B cell (primary cell): ENCODE measurements at regions of chr18 and their contacts with region 1.

Region 1: DNA sequence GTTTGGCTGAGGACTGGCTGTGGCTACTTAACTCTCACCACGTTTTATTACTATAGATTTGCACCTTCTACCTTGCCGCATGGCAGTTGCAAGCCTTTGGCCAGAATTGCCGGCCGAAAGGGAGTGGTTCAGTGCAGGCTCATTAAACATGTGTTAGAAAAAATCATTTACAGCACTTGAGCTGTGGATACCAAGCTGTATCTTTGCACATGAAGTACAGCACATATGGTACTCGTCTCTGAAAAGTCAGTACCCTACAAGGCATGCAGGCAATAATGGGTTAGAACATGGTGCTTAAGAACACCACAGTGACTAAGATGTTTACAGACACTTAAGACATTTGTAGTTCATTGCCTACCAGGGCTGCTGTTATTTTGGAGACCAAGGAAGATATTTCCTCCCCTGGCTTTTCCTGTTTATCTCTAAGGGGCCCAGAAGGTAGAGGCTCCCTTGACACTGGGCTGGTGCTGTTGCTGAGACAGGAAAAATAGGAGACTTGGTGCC is 103.1 kb downstream of the ZNF532 start:
- DNase-seq: no peak
- ATAC-seq: no peak
- H3K4me3 ChIP-seq: no peak overlapping the region
- H3K4me3 Mint-ChIP-seq: peak overlapping the region; percentile 75
- H3K27ac ChIP-seq: peak overlapping the region; percentile 94 to 99
- H3K27ac Mint-ChIP-seq: peak overlapping the region; percentile 95
- H3K4me1 ChIP-seq: peaks cover 86 to 88% of the 10 kb centered on the region in 2 donors
- H3K4me1 Mint-ChIP-seq: peaks cover 86% of the 10 kb centered on the region
- H3K27me3 ChIP-seq: no peaks in the 10 kb centered on the region
- H3K27me3 Mint-ChIP-seq: no peaks in the 10 kb centered on the region
- CTCF ChIP-seq: no peak

Region 2: DNA sequence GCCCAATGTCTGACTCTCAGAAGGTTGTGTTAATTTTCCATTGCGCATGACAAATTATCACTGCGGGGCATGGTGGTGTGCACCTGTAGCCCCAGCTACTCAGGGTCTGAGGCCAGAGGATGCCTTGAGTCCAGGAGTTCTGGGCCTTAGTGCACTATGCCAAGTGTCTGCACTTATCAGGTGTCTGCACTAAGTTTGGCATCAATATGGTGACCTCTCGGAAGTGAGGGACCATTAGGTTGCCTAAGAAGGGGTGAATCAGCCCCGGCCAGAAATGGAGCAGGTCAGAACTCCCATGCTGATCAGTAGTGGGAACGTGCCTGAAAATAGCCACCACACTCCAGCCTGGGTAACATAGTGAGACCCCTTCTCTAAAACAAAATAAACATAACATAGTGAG is 164.8 kb before region 1 on chr18:
- CTCF ChIA-PET with region 1: no interaction called
- POLR2A ChIA-PET with region 1: no interaction called
- intact Hi-C with region 1: no loop called
- DNase-seq: no peak
- ATAC-seq: no peak
- H3K4me3 ChIP-seq: no peak overlapping the region
- H3K4me3 Mint-ChIP-seq: no peak overlapping the region
- H3K27ac ChIP-seq: no peak overlapping the region
- H3K27ac Mint-ChIP-seq: no peak overlapping the region
- H3K4me1 ChIP-seq: peaks cover 4 to 6% of the 10 kb centered on the region in 2 donors
- H3K4me1 Mint-ChIP-seq: peaks cover 7% of the 10 kb centered on the region
- H3K27me3 ChIP-seq: no peaks in the 10 kb centered on the region
- H3K27me3 Mint-ChIP-seq: no peaks in the 10 kb centered on the region
- CTCF ChIP-seq: no peak

Region 3: DNA sequence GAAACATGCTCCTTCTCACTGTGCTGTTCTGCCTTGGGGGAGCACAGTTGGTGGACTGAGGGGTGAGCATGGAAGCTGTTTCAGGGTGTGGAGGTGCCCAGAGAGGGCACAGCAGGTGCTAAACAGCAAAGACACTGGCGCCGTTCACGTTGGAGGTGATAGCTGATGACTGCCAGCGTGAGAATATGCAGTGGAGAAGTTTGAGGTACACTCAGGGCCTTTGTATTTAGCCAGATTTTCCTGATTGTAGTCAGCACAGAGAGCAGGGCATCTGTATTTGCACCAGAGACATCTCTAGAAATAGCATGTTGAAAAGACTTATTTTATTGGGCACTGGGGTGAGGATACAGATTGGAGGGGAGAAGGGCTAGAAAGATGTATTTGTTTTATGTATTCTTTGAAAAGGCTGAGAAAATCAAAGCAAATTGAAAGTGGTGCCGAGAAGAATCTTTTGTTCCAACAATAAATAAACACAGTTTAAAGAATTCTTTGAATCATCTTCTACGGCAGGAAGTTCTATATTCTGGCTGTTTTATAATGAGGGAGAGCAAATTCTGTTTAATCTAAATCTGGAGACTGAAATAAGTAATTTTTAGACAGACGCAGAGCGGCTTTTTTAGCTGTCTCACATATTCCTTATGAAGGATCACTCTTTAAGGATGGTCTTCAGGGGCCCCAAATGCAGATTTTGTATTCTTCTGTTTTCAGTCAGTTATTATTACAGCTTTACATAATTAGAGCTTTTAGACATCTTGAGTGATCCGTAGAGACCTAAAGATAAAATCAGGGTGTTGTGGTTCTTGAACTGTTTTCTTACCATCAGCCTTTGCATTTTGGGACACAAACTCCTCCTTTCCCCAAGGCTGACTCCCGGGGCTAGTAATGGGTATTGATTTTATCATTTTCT is 96.0 kb before region 1 on chr18:
- CTCF ChIA-PET with region 1: no interaction called
- POLR2A ChIA-PET with region 1: no interaction called
- intact Hi-C with region 1: no loop called
- DNase-seq: no peak
- ATAC-seq: no peak
- H3K4me3 ChIP-seq: no peak overlapping the region
- H3K4me3 Mint-ChIP-seq: no peak overlapping the region
- H3K27ac ChIP-seq: no peak overlapping the region
- H3K27ac Mint-ChIP-seq: peak overlapping the region; percentile 22
- H3K4me1 ChIP-seq: peaks cover 4 to 25% of the 10 kb centered on the region in 2 donors
- H3K4me1 Mint-ChIP-seq: peaks cover 38% of the 10 kb centered on the region
- H3K27me3 ChIP-seq: no peaks in the 10 kb centered on the region
- H3K27me3 Mint-ChIP-seq: no peaks in the 10 kb centered on the region
- CTCF ChIP-seq: no peak

Region 4: GRCh38 chr18:58896268-58896667 is 71.5 kb before region 1 on chr18:
- CTCF ChIA-PET with region 1: interaction called, 3 read pairs
- POLR2A ChIA-PET with region 1: interaction called, 7 read pairs
- intact Hi-C with region 1: loop called (anchors 5 kb)
- DNase-seq: peak; percentile 72
- ATAC-seq: peak; percentile 88
- H3K4me3 ChIP-seq: peak overlapping the region in 4 of 5 experiments; percentile 31 to 58 (median 50)
- H3K4me3 Mint-ChIP-seq: peak overlapping the region; percentile 79
- H3K27ac ChIP-seq: peak overlapping the region; percentile 70 to 86
- H3K27ac Mint-ChIP-seq: peak overlapping the region; percentile 86
- H3K4me1 ChIP-seq: peaks cover 58 to 62% of the 10 kb centered on the region in 2 donors
- H3K4me1 Mint-ChIP-seq: peaks cover 76% of the 10 kb centered on the region
- H3K27me3 ChIP-seq: no peaks in the 10 kb centered on the region
- H3K27me3 Mint-ChIP-seq: no peaks in the 10 kb centered on the region
- CTCF ChIP-seq: no peak

Region 5: DNA sequence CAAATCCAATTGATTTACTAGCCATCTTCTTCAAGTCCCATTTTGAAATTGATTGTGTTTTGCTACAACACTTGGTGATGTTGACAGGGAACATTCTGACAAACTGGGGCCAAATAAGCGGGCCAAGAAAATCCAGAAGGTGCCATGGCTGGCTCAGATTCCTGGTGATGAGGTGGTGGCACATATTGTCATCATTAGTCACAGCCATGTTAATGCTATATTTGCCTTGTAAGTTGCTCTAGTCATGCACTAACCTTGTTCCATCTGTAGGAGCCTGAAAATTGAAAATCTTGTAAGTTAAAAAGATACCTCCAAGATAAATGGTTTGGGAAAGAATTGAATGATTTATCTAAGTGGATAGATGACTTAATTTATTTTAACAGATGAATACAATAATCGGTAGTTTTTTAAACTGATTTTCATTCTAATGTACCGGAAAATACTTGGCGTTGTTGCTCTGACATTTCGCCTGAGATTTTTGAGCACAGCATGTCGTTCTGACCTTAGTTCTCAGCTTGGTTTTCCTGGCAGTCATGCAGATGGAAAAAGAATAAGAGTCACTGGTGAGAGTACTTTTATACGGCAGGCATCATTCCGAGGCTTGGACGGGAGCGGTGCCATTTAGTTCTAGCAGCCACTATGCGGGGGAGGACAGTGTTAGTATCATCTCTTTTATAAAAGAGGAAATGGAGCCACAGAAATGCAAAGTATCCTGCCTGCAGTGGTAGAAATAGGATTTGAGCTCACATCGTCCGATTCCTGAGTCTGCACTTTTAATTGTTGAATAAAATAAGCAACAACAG is 30.8 kb after region 1 on chr18:
- CTCF ChIA-PET with region 1: no interaction called
- POLR2A ChIA-PET with region 1: no interaction called
- intact Hi-C with region 1: loop called (anchors 2 kb)
- DNase-seq: peak; percentile 47
- ATAC-seq: peak; percentile 89
- H3K4me3 ChIP-seq: peak overlapping the region in 3 of 5 experiments; percentile 1 to 28 (median 17)
- H3K4me3 Mint-ChIP-seq: peak overlapping the region; percentile 73
- H3K27ac ChIP-seq: no peak overlapping the region
- H3K27ac Mint-ChIP-seq: peak overlapping the region; percentile 46
- H3K4me1 ChIP-seq: peaks cover 0 to 10% of the 10 kb centered on the region in 2 donors
- H3K4me1 Mint-ChIP-seq: peaks cover 15% of the 10 kb centered on the region
- H3K27me3 ChIP-seq: no peaks in the 10 kb centered on the region
- H3K27me3 Mint-ChIP-seq: no peaks in the 10 kb centered on the region
- CTCF ChIP-seq: no peak